ENCODE measurements at regions of chr20 and their contacts with region 1.

Region 1: GRCh38 chr20:56843817-56844216 is 214.7 kb downstream of the TFAP2C start:
- DNase-seq: no peak
- H3K4me3 ChIP-seq: peak overlapping the region; percentile 16
- H3K27ac ChIP-seq: peak overlapping the region; percentile 94
- H3K4me1 ChIP-seq: peaks cover 59% of the 10 kb centered on the region
- CTCF ChIP-seq: peak; percentile 67

Region 2: DNA sequence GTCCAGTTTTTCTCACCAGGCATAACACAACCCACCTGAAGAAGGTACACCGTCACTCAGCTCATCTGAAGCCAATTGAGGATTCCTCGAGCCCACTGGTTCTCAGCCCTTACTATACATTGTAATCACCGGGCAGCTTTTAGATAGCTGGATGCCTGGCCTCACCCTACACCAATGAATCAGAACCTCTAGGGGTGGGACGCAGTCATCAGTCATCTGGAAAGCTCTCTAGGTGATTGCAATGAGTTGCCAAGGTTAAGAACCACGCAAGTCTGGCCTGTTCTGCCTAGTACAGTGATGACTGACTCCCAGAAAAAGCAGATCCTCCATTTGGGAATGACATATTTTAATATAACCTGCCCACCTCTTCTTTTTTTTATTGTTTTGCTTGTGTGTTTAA is 554.2 kb before region 1 on chr20:
- CTCF ChIA-PET with region 1: no interaction called
- POLR2A ChIA-PET with region 1: no interaction called
- intact Hi-C with region 1: no loop called
- DNase-seq: no peak
- H3K4me3 ChIP-seq: no peak overlapping the region
- H3K27ac ChIP-seq: no peak overlapping the region
- H3K4me1 ChIP-seq: no peaks in the 10 kb centered on the region
- CTCF ChIP-seq: no peak

Region 3: GRCh38 chr20:56702931-56703719 is 140.7 kb before region 1 on chr20:
- CTCF ChIA-PET with region 1: no interaction called
- POLR2A ChIA-PET with region 1: no interaction called
- intact Hi-C with region 1: no loop called
- DNase-seq: no peak
- H3K4me3 ChIP-seq: no peak overlapping the region
- H3K27ac ChIP-seq: no peak overlapping the region
- H3K4me1 ChIP-seq: no peaks in the 10 kb centered on the region
- CTCF ChIP-seq: no peak

Region 4: DNA sequence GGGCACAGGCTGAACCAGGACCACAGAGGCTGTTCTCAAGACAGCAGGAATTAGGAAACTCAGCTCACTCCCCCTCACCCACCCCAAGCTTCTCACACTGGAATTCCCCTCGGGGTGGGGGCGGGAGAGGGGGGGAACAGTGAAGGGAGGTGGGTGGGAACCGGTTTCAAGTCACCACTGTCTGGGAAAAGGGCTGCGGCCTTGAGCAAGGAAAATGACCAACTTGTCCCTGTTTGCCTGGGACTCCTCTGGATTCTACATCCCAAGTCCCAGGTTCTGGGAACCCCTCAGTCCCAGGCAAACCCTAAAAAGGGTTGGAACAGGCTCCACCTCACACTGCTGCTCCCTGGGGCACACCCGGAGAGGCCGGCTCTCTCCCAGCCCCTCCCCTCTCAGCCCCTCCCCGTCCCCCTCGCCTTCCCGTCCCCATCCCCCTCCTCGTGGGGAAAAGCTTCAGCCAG is 16.0 kb after region 1 on chr20:
- CTCF ChIA-PET with region 1: interaction called, 4 read pairs
- POLR2A ChIA-PET with region 1: interaction called, 15 read pairs
- intact Hi-C with region 1: no loop called
- DNase-seq: no peak
- H3K4me3 ChIP-seq: no peak overlapping the region
- H3K27ac ChIP-seq: no peak overlapping the region
- H3K4me1 ChIP-seq: peaks cover 35% of the 10 kb centered on the region
- CTCF ChIP-seq: no peak

Region 5: GRCh38 chr20:56870271-56870670 is 26.5 kb after region 1 on chr20:
- CTCF ChIA-PET with region 1: interaction called, 3 read pairs
- POLR2A ChIA-PET with region 1: interaction called, 6 read pairs
- intact Hi-C with region 1: loop called (anchors 2 kb)
- DNase-seq: peak; percentile 82
- H3K4me3 ChIP-seq: no peak overlapping the region
- H3K27ac ChIP-seq: peak overlapping the region; percentile 18
- H3K4me1 ChIP-seq: peaks cover 49% of the 10 kb centered on the region
- CTCF ChIP-seq: no peak

Measured in OCI-LY7 (cell line).